Esophagus squamous epithelium (tissue), 5 donors: ENCODE measurements at regions of chr5 and their contacts with region 1.

Region 1: DNA sequence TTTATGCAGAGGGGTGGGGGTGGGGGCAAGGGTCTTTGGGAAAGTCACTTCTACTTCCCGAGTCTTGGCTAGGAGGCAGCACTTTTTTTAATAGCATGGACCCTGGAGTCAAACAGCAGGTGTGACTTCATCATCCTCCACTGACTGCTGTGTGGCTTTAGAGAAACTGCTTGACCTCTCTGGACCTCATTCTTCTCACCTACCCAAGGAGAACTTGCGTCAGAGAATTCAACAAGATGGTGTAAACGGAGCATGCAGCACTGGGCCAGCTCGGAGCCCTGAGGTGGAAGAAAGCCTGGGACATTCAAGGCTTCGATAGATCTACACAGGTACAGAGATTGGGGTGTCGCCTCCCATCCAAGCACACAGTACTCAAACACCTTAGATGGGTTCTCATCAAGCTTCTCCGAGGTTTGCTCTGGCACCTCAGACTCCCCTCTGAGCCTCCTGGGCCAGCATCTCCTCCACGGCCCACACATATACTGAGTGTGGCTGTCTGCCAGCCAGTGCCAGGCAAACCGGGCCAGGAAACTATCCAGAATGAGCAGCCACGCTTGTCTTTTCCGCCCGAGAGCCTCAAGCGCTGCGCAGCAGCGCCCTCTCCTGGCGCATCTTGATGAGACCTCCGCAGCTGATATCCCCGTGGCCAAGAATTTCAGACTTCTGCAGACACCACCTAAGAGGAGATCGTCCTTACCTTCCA is 4.6 kb upstream of the SLC25A48 start:
- DNase-seq: no peak
- H3K4me3 ChIP-seq: no peak overlapping the region
- H3K27ac ChIP-seq: no peak overlapping the region
- H3K4me1 ChIP-seq: peaks cover 4 to 9% (median 6%) of the 10 kb centered on the region in 3 donors
- H3K27me3 ChIP-seq: peaks cover 0 to 61% (median 0%) of the 10 kb centered on the region in 4 donors
- CTCF ChIP-seq: peak; percentile 18 to 87 (median 71)
- POLR2A ChIP-seq: no peak

Region 2: GRCh38 chr5:135466178-135467050 is 363.4 kb before region 1 on chr5:
- intact Hi-C with region 1: loop called (anchors 5 kb)
- DNase-seq: no peak
- H3K4me3 ChIP-seq: peak overlapping the region in 2 of 4 donors; percentile 4 to 43
- H3K27ac ChIP-seq: no peak overlapping the region
- H3K4me1 ChIP-seq: peaks cover 3 to 22% (median 5%) of the 10 kb centered on the region in 3 donors
- H3K27me3 ChIP-seq: peaks cover 0 to 62% (median 0%) of the 10 kb centered on the region in 4 donors
- CTCF ChIP-seq: peak; percentile 79 to 91 (median 88)
- POLR2A ChIP-seq: no peak

Region 3: GRCh38 chr5:135560858-135561257 is 269.0 kb before region 1 on chr5:
- intact Hi-C with region 1: loop called (anchors 5 kb)
- DNase-seq: no peak
- H3K4me3 ChIP-seq: no peak overlapping the region
- H3K27ac ChIP-seq: no peak overlapping the region
- H3K4me1 ChIP-seq: peaks cover 0 to 9% (median 0%) of the 10 kb centered on the region in 3 donors
- H3K27me3 ChIP-seq: peaks cover 0 to 40% (median 0%) of the 10 kb centered on the region in 4 donors
- CTCF ChIP-seq: peak; percentile 47 to 88 (median 78)
- POLR2A ChIP-seq: no peak

Region 4: GRCh38 chr5:135739383-135739981 is 90.3 kb before region 1 on chr5:
- intact Hi-C with region 1: loop called (anchors 10 kb)
- DNase-seq: no peak
- H3K4me3 ChIP-seq: no peak overlapping the region
- H3K27ac ChIP-seq: no peak overlapping the region
- H3K4me1 ChIP-seq: no peaks in the 10 kb centered on the region
- H3K27me3 ChIP-seq: no peaks in the 10 kb centered on the region
- CTCF ChIP-seq: no peak
- POLR2A ChIP-seq: no peak